GM12878 (cell line): ENCODE measurements at regions of chr4 and their contacts with region 1.

Region 1: GRCh38 chr4:74874753-74875367 is 58.1 kb upstream of the PARM1 start:
- DNase-seq: peak; percentile 20
- ATAC-seq: peak; percentile 89
- H3K4me3 ChIP-seq: no peak overlapping the region
- H3K27ac ChIP-seq: no peak overlapping the region
- H3K4me1 ChIP-seq: peaks cover 22% of the 10 kb centered on the region
- H3K27me3 ChIP-seq: no peaks in the 10 kb centered on the region
- CTCF ChIP-seq: peak; percentile 78 to 87 (median 84)
- EP300 ChIP-seq: no peak
- POLR2A ChIP-seq: no peak
- RAD21 ChIP-seq: peak; percentile 88

Region 2: GRCh38 chr4:74821551-74821950 is 53.3 kb before region 1 on chr4:
- CTCF ChIA-PET with region 1: no interaction called
- POLR2A ChIA-PET with region 1: no interaction called
- RAD21 ChIA-PET with region 1: no interaction called
- SMC1A ChIA-PET with region 1: no interaction called
- in situ Hi-C with region 1: no loop called
- intact Hi-C with region 1: no loop called
- DNase-seq: no peak
- ATAC-seq: no peak
- H3K4me3 ChIP-seq: no peak overlapping the region
- H3K27ac ChIP-seq: no peak overlapping the region
- H3K4me1 ChIP-seq: no peaks in the 10 kb centered on the region
- H3K27me3 ChIP-seq: no peaks in the 10 kb centered on the region
- CTCF ChIP-seq: no peak
- EP300 ChIP-seq: no peak
- POLR2A ChIP-seq: no peak
- RAD21 ChIP-seq: no peak

Region 3: GRCh38 chr4:74886490-74886889 is 11.6 kb after region 1 on chr4:
- CTCF ChIA-PET with region 1: interaction called, 31 read pairs
- POLR2A ChIA-PET with region 1: no interaction called
- RAD21 ChIA-PET with region 1: interaction called, 4 read pairs
- SMC1A ChIA-PET with region 1: interaction called, 13 read pairs
- in situ Hi-C with region 1: no loop called
- intact Hi-C with region 1: no loop called
- DNase-seq: no peak
- ATAC-seq: no peak
- H3K4me3 ChIP-seq: no peak overlapping the region
- H3K27ac ChIP-seq: no peak overlapping the region
- H3K4me1 ChIP-seq: no peaks in the 10 kb centered on the region
- H3K27me3 ChIP-seq: no peaks in the 10 kb centered on the region
- CTCF ChIP-seq: no peak
- EP300 ChIP-seq: no peak
- POLR2A ChIP-seq: no peak
- RAD21 ChIP-seq: no peak

Region 4: DNA sequence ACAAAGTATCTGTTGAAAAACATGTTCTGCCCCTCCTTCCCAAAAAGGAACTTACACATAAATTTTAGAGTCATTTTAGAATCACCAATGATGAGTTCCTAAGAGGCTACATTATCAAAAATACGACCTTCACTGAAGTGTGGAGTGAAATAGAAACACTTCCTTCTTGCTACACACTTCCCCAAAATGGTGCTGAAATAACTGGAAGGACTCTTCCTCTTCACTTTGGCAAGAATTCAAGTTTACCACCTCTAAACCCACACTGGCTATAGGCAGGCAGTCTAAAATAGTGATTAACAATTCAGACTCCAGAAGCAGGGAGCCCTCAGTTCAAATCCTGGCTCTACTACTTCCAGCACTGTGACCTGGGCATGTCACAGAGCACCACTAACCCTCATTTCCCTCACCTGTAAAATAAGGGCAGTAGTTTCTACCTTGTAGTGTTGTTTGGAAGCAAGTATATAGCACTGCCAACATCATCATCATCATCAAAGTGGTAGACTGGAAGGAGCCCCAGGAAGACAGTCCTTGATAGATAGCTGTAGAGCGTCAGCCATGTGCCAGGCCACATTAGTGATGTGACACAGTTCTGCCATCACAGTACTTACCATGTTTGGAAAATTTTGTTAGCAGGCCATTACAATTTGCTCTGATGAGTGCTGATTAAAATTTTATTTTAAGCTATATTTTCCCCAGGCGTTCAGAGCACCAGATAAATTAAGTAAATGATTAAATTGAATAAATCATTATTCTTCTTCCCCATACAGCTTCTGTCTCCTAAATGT is 161.4 kb after region 1 on chr4:
- CTCF ChIA-PET with region 1: interaction called, 4 read pairs
- POLR2A ChIA-PET with region 1: no interaction called
- RAD21 ChIA-PET with region 1: no interaction called
- SMC1A ChIA-PET with region 1: no interaction called
- in situ Hi-C with region 1: no loop called
- intact Hi-C with region 1: loop called (anchors 2 kb)
- DNase-seq: peak; percentile 23
- ATAC-seq: peak; percentile 59
- H3K4me3 ChIP-seq: no peak overlapping the region
- H3K27ac ChIP-seq: no peak overlapping the region
- H3K4me1 ChIP-seq: peaks cover 6% of the 10 kb centered on the region
- H3K27me3 ChIP-seq: no peaks in the 10 kb centered on the region
- CTCF ChIP-seq: no peak
- EP300 ChIP-seq: no peak
- POLR2A ChIP-seq: no peak
- RAD21 ChIP-seq: no peak

Region 5: DNA sequence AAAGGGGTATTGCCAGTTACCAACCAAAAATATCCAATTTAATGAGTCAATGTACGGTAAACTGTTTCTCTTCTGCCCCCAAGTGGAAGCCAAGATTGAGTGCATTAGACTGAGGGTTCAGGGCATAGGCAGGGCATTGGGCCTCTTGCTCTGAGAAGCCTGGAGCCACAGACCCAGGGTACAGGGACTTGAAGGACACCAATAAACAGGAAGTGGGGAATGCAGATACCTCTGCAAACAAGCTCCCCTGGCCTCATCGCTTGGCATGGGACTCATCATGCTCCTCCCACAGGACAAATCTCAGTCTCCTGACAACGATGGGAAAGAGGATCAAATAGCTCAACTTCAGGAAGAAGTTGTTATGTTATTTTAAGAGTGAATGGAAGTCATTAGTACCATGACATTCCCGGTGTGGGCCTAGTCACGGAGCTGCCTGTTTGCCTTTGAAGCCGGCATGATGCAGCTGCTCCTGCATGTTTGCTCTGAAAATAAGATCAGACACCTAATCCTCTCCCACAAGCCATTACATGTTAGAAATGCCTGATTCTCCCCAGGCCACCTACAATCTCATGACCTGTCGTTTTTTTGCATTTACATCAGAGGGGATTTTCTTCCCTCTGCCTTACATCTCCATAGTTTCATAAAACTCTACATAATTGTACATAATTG is 415.2 kb after region 1 on chr4:
- CTCF ChIA-PET with region 1: interaction called, 84 read pairs
- POLR2A ChIA-PET with region 1: no interaction called
- RAD21 ChIA-PET with region 1: interaction called, 61 read pairs
- SMC1A ChIA-PET with region 1: interaction called, 72 read pairs
- in situ Hi-C with region 1: loop called (anchors 5 kb)
- intact Hi-C with region 1: loop called (anchors 1 kb)
- DNase-seq: peak; percentile 23
- ATAC-seq: peak; percentile 98
- H3K4me3 ChIP-seq: no peak overlapping the region
- H3K27ac ChIP-seq: no peak overlapping the region
- H3K4me1 ChIP-seq: no peaks in the 10 kb centered on the region
- H3K27me3 ChIP-seq: no peaks in the 10 kb centered on the region
- CTCF ChIP-seq: peak; percentile 59 to 72 (median 59)
- EP300 ChIP-seq: no peak
- POLR2A ChIP-seq: no peak
- RAD21 ChIP-seq: peak; percentile 90

Region 6: GRCh38 chr4:75490155-75490554 is 615.3 kb after region 1 on chr4:
- CTCF ChIA-PET with region 1: interaction called, 10 read pairs
- POLR2A ChIA-PET with region 1: no interaction called
- RAD21 ChIA-PET with region 1: interaction called, 6 read pairs
- SMC1A ChIA-PET with region 1: interaction called, 8 read pairs
- in situ Hi-C with region 1: no loop called
- intact Hi-C with region 1: loop called (anchors 5 kb)
- DNase-seq: no peak
- ATAC-seq: no peak
- H3K4me3 ChIP-seq: no peak overlapping the region
- H3K27ac ChIP-seq: no peak overlapping the region
- H3K4me1 ChIP-seq: no peaks in the 10 kb centered on the region
- H3K27me3 ChIP-seq: no peaks in the 10 kb centered on the region
- CTCF ChIP-seq: no peak; a peak in 1 of 6 replicates
- EP300 ChIP-seq: no peak
- POLR2A ChIP-seq: no peak
- RAD21 ChIP-seq: peak; percentile 34; the same call in 1 of the 2 replicates